ENCODE measurements at regions of chr12 and their contacts with region 1.

Region 1: GRCh38 chr12:62603061-62603810 is 136.6 kb downstream of the MON2 start:
- DNase-seq: peak; percentile 86
- H3K4me3 ChIP-seq: peak overlapping the region; percentile 63 to 85
- H3K27ac ChIP-seq: peak overlapping the region; percentile 99
- H3K4me1 ChIP-seq: no peaks in the 10 kb centered on the region
- H3K27me3 ChIP-seq: no peaks in the 10 kb centered on the region
- CTCF ChIP-seq: peak; percentile 15 to 80 (median 60)
- POLR2A ChIP-seq: peak; percentile 14

Region 2: GRCh38 chr12:62631471-62632410 is 28.5 kb after region 1 on chr12:
- intact Hi-C with region 1: loop called (anchors 2 kb)
- DNase-seq: peak; percentile 68
- H3K4me3 ChIP-seq: peak overlapping the region; percentile 31 to 32
- H3K27ac ChIP-seq: peak overlapping the region; percentile 47 to 72
- H3K4me1 ChIP-seq: no peaks in the 10 kb centered on the region
- H3K27me3 ChIP-seq: no peaks in the 10 kb centered on the region
- CTCF ChIP-seq: peak in 2 of 4 experiments; percentile 36 to 55
- POLR2A ChIP-seq: no peak

Region 3: DNA sequence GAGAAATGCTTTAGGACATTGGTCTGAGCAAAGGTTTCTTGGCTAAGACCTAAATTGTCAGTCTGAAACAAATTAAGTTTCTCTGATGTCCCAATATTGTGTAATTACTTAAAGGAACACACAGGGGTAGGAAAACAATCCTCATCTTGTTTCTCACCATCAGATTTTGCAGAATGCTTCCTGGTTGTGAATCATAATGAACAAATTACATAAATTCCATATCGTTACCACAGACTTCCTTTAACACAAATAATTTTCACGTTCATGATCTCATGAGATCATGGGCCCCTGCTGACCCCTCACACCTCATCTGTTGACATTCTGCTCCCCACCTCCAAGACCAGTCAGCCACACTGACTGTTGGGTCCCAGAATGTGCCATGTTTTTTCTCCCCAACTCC is 57.5 kb after region 1 on chr12:
- intact Hi-C with region 1: no loop called
- DNase-seq: no peak
- H3K4me3 ChIP-seq: no peak overlapping the region
- H3K27ac ChIP-seq: no peak overlapping the region
- H3K4me1 ChIP-seq: no peaks in the 10 kb centered on the region
- H3K27me3 ChIP-seq: no peaks in the 10 kb centered on the region
- CTCF ChIP-seq: no peak
- POLR2A ChIP-seq: no peak

Measured in prostate gland (tissue), 2 donors.